Posterior cingulate gyrus (tissue), 11 donors: ENCODE measurements at regions of chr2 and their contacts with region 1.

Region 1: DNA sequence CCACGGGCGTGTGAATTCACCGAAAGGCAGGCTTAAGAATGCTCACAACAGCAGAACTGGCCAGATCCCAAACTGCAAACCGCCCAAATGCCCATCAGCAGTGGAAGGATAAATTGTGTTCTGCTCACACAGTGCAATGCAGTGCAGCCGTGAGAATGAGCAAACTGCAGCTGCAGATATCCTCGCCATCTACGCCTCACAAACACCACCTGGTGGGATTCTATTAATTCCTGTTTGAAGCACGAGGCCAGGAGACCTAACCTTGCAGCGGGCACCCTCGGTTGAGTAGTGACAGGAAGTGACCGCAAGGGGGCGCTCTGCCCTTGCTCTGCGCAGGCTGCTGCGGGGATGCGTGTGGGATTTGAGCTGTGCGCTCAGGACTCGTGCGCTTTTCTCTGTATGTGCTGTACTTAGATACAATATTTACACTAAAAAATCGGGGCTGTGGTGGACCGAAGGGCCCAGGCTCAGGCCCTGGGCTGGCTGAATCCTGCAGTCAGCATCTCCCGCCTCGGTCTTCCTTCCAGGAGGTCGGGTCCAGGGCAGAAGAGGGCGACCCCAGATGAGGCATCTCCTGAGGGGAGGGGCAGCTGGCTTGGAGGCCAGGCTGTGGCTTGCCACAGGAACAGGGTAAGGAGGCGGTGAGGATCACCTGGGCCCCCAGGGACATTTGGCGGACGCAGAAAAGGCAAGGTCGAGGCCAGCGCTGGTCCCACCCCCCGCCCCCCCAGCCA is 19.8 kb upstream of the PDIA6 start:
- DNase-seq: peak; percentile 75 to 98 (median 88)

Region 2: GRCh38 chr2:10773821-10774341 is 58.5 kb before region 1 on chr2:
- intact Hi-C with region 1: no loop called
- DNase-seq: peak in 2 of 10 donors; percentile 46 to 77

Region 3: GRCh38 chr2:10911261-10912075 is 79.1 kb after region 1 on chr2 and contains the start of gene KCNF1:
- intact Hi-C with region 1: loop called (anchors 5 kb)
- DNase-seq: peak in 5 of 10 donors; percentile 8 to 92 (median 82)

Region 4: GRCh38 chr2:10985260-10985659 is 152.9 kb after region 1 on chr2:
- intact Hi-C with region 1: loop called (anchors 5 kb)
- DNase-seq: peak in 1 of 10 donors; percentile 71

Region 5: GRCh38 chr2:11124503-11125068 is 292.2 kb after region 1 on chr2:
- intact Hi-C with region 1: loop called (anchors 1 kb)
- DNase-seq: peak; percentile 61 to 96 (median 80)